ENCODE measurements at regions of chr21 and their contacts with region 1.

Region 1: DNA sequence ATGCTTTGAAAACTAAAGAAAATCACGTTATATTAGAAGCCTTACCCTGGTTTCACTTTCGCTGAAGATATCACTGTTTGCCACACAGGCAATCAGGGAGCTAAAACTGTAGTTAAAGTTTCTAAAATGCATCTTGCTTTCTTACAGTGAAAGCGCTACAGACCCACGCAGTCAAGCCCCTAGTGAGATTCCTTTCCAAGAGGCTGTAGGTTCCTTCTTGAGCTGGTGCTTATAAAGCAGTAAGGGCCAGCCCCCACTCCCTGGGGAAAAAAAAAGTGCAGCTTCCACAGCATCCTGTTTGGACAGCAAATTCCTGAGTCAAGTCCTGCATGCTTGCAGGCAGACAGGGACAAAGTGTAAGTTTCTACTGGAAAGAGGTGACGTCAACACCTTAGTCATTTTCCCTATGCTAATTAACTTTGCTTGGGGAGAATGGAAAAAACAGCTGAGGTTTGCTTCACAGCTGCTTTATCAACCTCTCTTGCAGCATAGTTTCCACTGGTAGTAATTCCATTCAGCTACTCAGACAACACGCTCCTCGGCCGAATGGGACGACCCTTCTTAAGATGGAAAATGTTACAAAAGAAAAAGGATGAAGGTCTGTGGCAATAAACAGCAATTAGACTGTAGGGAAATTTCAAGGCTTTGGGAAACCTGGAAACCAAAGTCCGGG is 14.7 kb upstream of the KCNE1 start:
- DNase-seq: peak in 1 of 2 donors; percentile 92
- ATAC-seq: peak; percentile 86 to 95 (median 92)
- H3K4me3 ChIP-seq: peak overlapping the region; percentile 4 to 63 (median 56)
- H3K27ac ChIP-seq: peak overlapping the region; percentile 68 to 97 (median 91)
- H3K4me1 ChIP-seq: peaks cover 7 to 71% (median 54%) of the 10 kb centered on the region in 9 donors
- H3K27me3 ChIP-seq: no peaks in the 10 kb centered on the region
- CTCF ChIP-seq: no peak

Region 2: GRCh38 chr21:34313116-34313515 is 213.6 kb before region 1 on chr21:
- intact Hi-C with region 1: no loop called
- DNase-seq: no peak
- ATAC-seq: no peak
- H3K4me3 ChIP-seq: no peak overlapping the region
- H3K27ac ChIP-seq: no peak overlapping the region
- H3K4me1 ChIP-seq: peaks cover 0 to 16% (median 0%) of the 10 kb centered on the region in 9 donors
- H3K27me3 ChIP-seq: no peaks in the 10 kb centered on the region
- CTCF ChIP-seq: no peak

Region 3: GRCh38 chr21:34545079-34545884 is 18.5 kb after region 1 on chr21:
- intact Hi-C with region 1: loop called in 2 of 10 experiments (anchors 1 to 2 kb)
- DNase-seq: no peak
- ATAC-seq: peak; percentile 69 to 87 (median 80)
- H3K4me3 ChIP-seq: peak overlapping the region in 3 of 10 donors; percentile 2 to 5 (median 3)
- H3K27ac ChIP-seq: peak overlapping the region; percentile 50 to 87 (median 79)
- H3K4me1 ChIP-seq: peaks cover 0 to 46% (median 30%) of the 10 kb centered on the region in 9 donors
- H3K27me3 ChIP-seq: no peaks in the 10 kb centered on the region
- CTCF ChIP-seq: no peak

Region 4: DNA sequence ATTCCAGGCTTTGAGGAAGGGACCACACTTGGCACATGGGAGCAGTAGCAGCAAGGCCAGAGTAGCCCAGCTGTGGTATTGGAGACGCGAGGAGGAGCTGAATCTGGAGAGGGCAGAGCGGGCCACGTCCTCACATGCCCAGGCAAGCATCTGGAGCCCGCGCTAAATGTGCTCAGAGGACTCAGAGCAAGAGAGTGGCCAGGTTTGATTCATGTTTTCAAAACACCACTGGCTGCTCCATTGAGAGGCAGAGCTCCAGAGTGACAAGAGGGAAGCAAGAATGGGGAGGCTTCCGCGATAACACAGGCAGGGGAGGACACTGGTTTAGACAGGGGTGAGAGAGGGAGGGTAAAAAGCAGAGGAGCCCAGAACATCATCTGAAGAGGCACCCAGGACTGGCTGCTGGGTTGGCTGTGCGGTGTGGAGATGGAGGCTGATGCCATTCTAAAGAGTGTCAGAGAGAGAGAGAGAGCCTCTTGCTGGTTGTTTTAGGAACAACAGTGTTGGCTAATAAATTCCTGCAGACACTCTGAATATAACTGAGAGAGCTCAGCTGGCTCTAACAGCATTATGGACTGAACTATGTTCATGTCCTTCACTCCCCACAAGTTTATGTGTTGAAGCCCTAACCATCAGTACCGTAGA is 55.9 kb after region 1 on chr21:
- intact Hi-C with region 1: loop called in 7 of 10 experiments (anchors 2 to 5 kb)
- DNase-seq: peak; percentile 34 to 38
- ATAC-seq: peak; percentile 68 to 87 (median 72)
- H3K4me3 ChIP-seq: no peak overlapping the region
- H3K27ac ChIP-seq: peak overlapping the region; percentile 16 to 92 (median 70)
- H3K4me1 ChIP-seq: peaks cover 27 to 66% (median 43%) of the 10 kb centered on the region in 9 donors
- H3K27me3 ChIP-seq: no peaks in the 10 kb centered on the region
- CTCF ChIP-seq: peak in 8 of 9 donors; percentile 18 to 58 (median 44)

Region 5: DNA sequence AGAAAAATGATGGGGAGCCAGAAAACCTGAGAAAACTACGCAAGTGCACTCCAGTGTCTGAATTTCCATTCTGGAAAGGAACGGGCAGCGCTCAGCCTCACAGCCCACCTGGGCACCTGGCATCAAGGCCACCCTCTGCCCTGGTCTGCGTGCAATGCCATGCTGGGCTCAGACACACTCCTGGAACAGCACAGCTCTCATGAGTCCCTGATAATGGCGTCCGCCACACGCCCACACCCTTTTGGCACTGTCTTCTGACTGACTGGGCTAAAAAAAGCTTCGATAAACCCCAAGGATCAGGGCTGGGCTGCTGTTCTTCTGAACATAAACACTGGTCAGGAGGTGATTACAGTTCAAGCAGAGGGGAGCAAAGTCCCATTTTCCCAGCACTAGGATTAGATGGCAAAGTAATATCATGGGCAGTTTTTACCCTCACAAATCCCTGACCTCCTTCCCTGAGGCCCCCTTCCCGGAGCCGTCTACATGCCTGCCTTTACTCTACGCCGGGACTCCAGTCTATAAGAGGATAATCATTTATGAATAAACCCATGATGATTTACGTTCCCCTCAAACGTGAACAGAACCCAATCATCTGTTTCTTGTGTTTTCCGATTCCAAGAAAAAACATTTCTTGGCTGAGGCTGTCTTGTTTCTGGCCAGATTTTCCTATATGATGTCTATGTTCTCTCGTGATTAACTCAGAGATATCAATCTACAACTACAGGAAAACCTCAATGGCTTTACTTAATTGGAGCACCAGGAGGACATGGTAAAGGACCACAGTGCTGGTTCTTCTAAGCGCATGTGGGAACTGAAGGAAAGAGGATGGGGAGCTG is 65.6 kb after region 1 on chr21:
- intact Hi-C with region 1: loop called in 1 of 10 experiments (anchors 5 kb)
- DNase-seq: peak; percentile 58 to 80
- ATAC-seq: peak; percentile 86 to 95 (median 93)
- H3K4me3 ChIP-seq: peak overlapping the region in 5 of 10 donors; percentile 7 to 29 (median 18)
- H3K27ac ChIP-seq: peak overlapping the region; percentile 36 to 89 (median 68)
- H3K4me1 ChIP-seq: peaks cover 11 to 66% (median 46%) of the 10 kb centered on the region in 9 donors
- H3K27me3 ChIP-seq: no peaks in the 10 kb centered on the region
- CTCF ChIP-seq: no peak

Region 6: DNA sequence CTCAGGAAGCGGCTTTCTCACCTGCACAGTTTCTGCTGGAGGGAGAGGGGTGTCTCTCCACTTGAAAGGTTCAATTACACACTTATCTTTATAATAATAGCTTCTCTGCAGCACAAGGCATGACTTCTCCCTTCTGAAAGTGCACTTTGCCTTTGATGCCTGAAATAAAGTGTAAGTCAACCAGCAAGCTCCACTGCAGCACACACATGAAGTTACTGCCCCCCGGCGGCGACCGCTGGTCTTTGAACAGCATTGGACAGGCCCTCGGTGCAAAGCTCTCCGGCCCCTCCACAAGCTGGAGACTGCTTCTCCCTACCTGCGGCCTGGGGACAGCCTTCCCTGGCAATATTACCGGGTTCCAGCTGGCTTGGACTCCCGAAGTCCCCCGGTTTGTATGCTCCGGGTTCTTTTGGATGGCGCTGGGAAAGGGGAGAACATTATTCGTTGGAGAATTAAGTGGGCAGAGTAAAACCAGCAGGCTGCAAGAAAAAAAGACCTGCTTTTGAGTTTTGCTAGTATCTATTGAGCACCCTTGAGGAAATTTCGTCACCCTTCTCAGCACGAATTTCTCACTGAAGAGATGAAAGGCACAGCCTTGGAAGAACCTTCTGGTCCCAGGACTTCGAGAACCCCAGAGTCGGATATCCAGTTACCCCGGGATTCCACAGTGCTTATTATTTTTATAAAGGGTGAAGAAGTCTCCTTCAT is 76.4 kb after region 1 on chr21:
- intact Hi-C with region 1: loop called in 4 of 10 experiments (anchors 5 kb)
- DNase-seq: peak; percentile 81 to 86
- ATAC-seq: peak; percentile 89 to 97 (median 96)
- H3K4me3 ChIP-seq: no peak overlapping the region
- H3K27ac ChIP-seq: peak overlapping the region in 3 of 10 donors; percentile 36 to 52 (median 50)
- H3K4me1 ChIP-seq: peaks cover 0 to 15% (median 8%) of the 10 kb centered on the region in 9 donors
- H3K27me3 ChIP-seq: no peaks in the 10 kb centered on the region
- CTCF ChIP-seq: peak; percentile 52 to 89 (median 85)

Region 7: DNA sequence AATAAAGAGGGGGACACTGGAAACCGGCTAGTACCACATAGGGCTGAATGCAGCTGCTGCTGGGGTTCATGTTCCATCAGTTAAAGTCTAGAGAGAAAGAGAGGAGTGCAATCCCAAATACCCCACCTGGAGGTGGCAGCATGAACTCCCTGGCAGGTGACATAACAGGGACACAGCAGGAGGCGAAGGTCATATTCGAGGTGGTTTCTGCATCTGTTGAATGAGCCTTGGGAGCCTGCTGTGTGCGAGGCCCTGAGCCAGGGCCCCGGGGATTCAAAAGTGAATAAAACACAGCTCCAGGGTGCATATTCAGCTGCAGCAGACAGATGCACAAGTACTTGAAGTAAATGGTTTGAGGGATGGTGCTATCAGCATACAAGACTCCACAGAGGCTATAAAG is 1076.7 kb after region 1 on chr21:
- intact Hi-C with region 1: no loop called
- DNase-seq: no peak
- ATAC-seq: no peak
- H3K4me3 ChIP-seq: no peak overlapping the region
- H3K27ac ChIP-seq: no peak overlapping the region
- H3K4me1 ChIP-seq: no peaks in the 10 kb centered on the region
- H3K27me3 ChIP-seq: peaks cover 0 to 20% (median 3%) of the 10 kb centered on the region in 7 donors
- CTCF ChIP-seq: no peak

Measured in heart right ventricle (tissue), 16 donors.